ENCODE measurements at regions of chr7 and their contacts with region 1.

Region 1: GRCh38 chr7:70529914-70530585 is 601.9 kb upstream of the GALNT17 start:
- DNase-seq: no peak
- H3K4me3 ChIP-seq: no peak overlapping the region
- H3K27ac ChIP-seq: no peak overlapping the region
- H3K4me1 ChIP-seq: no peaks in the 10 kb centered on the region
- CTCF ChIP-seq: no peak

Region 2: GRCh38 chr7:70673778-70674570 is 143.9 kb after region 1 on chr7:
- CTCF ChIA-PET with region 1: interaction called, 10 read pairs
- POLR2A ChIA-PET with region 1: no interaction called
- intact Hi-C with region 1: no loop called
- DNase-seq: no peak
- H3K4me3 ChIP-seq: no peak overlapping the region
- H3K27ac ChIP-seq: no peak overlapping the region
- H3K4me1 ChIP-seq: no peaks in the 10 kb centered on the region
- CTCF ChIP-seq: no peak

Region 3: DNA sequence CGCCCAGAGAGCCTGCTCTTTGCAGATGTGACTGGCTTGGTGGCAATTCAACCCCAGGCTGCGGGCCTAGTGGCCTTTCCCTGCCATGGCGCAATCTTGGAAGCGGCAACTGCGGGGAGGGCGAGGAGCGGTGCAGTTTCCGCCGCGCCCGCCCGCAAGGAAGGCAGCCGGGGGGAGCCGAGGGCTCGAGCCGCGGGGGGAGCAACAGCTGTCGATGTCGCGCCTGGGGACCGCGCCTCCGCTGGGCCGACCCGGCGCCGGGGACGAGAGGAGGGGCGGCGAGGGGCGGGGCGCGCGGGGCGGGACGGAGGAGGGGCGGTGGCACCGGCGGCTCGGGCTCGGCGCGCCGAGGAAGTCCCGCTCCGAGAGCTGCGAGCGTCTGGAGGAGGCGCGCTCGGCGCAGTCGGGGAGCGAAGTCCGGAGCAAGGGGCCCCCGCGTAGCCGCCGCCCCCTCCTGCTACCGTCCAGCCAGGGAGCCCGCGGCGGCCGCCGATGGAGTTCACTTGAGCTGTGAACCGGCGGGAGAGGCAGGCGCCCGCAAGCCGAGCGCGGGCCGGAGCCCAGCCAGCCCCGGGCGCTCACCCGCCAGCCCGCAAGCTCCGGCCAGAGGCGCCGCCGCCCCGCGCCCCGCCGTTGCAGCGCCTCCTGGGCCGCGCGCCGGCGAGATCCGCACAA is 163.8 kb after region 1 on chr7:
- CTCF ChIA-PET with region 1: no interaction called
- POLR2A ChIA-PET with region 1: no interaction called
- intact Hi-C with region 1: no loop called
- DNase-seq: peak; percentile 81
- H3K4me3 ChIP-seq: peak overlapping the region; percentile 79
- H3K27ac ChIP-seq: no peak overlapping the region
- H3K4me1 ChIP-seq: peaks cover 23% of the 10 kb centered on the region
- CTCF ChIP-seq: no peak

Measured in OCI-LY7 (cell line).